Mammary epithelial cell (primary cell): ENCODE measurements at regions of chr15 and their contacts with region 1.

Region 1: DNA sequence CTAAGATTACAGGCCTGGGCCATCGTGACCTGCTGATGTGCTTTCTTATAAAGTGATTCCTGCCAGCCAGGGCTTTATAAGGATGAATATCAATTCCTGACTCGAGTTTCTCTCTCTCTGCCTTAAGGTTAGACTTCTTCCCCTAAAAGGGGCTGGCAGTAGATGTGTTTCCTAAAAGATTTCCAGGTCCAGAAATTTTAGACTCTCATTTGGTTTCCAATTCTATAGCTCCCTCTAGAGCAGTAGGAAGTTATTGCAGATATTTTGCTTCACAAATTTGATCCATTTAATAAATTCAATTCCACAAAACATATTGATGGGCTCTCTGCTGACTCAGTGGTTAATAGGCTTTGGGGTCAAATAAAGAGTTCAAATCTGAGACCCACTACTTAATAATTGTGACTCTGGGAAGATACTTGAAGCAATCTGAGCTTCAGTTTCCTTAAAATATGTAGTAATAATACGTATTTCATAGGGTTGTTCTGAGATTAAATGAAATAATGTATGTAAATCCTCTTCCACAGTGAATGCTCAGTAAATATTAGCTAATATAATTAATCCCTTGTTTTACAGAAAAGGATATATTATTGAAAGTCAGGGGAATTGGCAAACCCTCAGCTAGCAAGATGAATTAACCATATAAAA is 2.1 kb downstream of the TRIM69 start:
- DNase-seq: peak; percentile 35
- H3K4me3 ChIP-seq: no peak overlapping the region
- H3K27ac ChIP-seq: no peak overlapping the region
- H3K4me1 ChIP-seq: no peaks in the 10 kb centered on the region
- H3K27me3 ChIP-seq: no peaks in the 10 kb centered on the region
- CTCF ChIP-seq: peak; percentile 68 to 75

Region 2: GRCh38 chr15:44183363-44183762 is 555.1 kb before region 1 on chr15:
- CTCF ChIA-PET with region 1: no interaction called
- dilution Hi-C with region 1: no loop called
- in situ Hi-C with region 1: no loop called
- intact Hi-C with region 1: no loop called
- DNase-seq: no peak
- H3K4me3 ChIP-seq: no peak overlapping the region
- H3K27ac ChIP-seq: no peak overlapping the region
- H3K4me1 ChIP-seq: no peaks in the 10 kb centered on the region
- H3K27me3 ChIP-seq: no peaks in the 10 kb centered on the region
- CTCF ChIP-seq: no peak

Region 3: GRCh38 chr15:44593042-44593736 is 145.3 kb before region 1 on chr15:
- CTCF ChIA-PET with region 1: no interaction called
- dilution Hi-C with region 1: no loop called
- in situ Hi-C with region 1: loop called in 1 of 2 experiments (anchors 25 kb)
- intact Hi-C with region 1: loop called (anchors 1 kb)
- DNase-seq: peak; percentile 16
- H3K4me3 ChIP-seq: no peak overlapping the region
- H3K27ac ChIP-seq: no peak overlapping the region
- H3K4me1 ChIP-seq: no peaks in the 10 kb centered on the region
- H3K27me3 ChIP-seq: no peaks in the 10 kb centered on the region
- CTCF ChIP-seq: peak; percentile 44 to 51

Region 4: DNA sequence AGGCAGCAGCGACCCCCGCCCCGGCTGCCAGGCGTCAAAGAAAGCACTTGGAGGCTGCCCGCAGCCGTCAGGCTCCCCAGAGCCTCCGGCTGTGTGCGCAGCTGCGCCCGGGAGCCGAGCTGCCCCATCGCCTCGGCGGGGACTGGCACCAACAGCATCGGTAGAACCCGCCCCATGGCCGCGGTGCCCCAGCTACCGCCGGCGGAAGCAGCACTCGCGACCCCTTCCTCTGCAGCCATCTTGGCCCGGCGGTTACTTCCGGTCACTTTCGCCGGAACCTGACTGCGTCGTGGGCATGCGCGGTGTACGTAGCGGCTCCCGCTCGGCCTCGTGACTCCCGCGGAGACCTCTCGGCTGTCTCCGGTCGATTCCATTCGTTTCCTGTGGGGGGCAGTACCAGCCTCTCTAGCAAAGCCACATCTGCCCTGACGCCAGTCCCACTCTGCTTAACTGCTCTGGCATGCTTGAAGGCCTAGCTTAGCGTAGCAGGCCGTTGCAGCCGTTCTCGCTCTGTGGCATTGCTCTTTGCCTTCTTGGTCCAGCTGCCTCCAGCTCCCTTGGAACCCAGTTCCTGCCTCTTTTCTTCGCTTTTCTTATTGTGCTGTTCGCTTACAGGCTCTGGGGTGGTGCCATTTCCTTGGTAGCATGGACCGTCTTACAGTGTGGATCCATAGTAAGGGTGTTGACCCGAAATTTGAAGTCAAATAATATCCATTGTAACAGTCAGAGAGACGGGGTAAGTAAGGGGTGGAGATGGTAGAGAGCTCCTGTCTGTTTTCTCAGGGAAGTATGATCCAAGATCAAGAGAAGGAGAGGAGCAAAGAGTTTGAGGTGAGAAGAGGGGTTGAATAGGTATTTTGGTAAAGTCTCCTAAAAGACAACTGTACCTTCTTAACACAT is 74.8 kb before region 1 on chr15 and contains the start of gene SPG11:
- CTCF ChIA-PET with region 1: interaction called, 8 read pairs
- dilution Hi-C with region 1: no loop called
- in situ Hi-C with region 1: no loop called
- intact Hi-C with region 1: loop called (anchors 1 kb)
- DNase-seq: peak; percentile 94
- H3K4me3 ChIP-seq: peak within 1 kb of the TSS; percentile 67 to 89 (median 82)
- H3K27ac ChIP-seq: peak within 1 kb of the TSS; percentile 58
- H3K4me1 ChIP-seq: peaks cover 15% of the 10 kb centered on the region
- H3K27me3 ChIP-seq: no peaks in the 10 kb centered on the region
- CTCF ChIP-seq: peak; percentile 80 to 82
- total RNA-seq, gene SPG11: 55.4 to 76.2 TPM

Region 5: GRCh38 chr15:44763187-44763586 is 24.7 kb after region 1 on chr15:
- CTCF ChIA-PET with region 1: no interaction called
- dilution Hi-C with region 1: no loop called
- in situ Hi-C with region 1: no loop called
- intact Hi-C with region 1: no loop called
- DNase-seq: no peak
- H3K4me3 ChIP-seq: no peak overlapping the region
- H3K27ac ChIP-seq: no peak overlapping the region
- H3K4me1 ChIP-seq: no peaks in the 10 kb centered on the region
- H3K27me3 ChIP-seq: peaks cover 4% of the 10 kb centered on the region
- CTCF ChIP-seq: no peak